ENCODE measurements at regions of chr10 and their contacts with region 1.

Region 1: GRCh38 chr10:110304780-110305421 is at the start of gene SMNDC1:
- DNase-seq: peak; percentile 98
- H3K4me3 Mint-ChIP-seq: peak within 1 kb of the TSS; percentile 94
- H3K27ac Mint-ChIP-seq: peak within 1 kb of the TSS; percentile 95
- H3K4me1 Mint-ChIP-seq: peaks cover 10% of the 10 kb centered on the region
- H3K27me3 Mint-ChIP-seq: no peaks in the 10 kb centered on the region
- CTCF ChIP-seq: no peak
- total RNA-seq, gene SMNDC1: 46.6 and 48.2 TPM in 2 replicates

Region 2: DNA sequence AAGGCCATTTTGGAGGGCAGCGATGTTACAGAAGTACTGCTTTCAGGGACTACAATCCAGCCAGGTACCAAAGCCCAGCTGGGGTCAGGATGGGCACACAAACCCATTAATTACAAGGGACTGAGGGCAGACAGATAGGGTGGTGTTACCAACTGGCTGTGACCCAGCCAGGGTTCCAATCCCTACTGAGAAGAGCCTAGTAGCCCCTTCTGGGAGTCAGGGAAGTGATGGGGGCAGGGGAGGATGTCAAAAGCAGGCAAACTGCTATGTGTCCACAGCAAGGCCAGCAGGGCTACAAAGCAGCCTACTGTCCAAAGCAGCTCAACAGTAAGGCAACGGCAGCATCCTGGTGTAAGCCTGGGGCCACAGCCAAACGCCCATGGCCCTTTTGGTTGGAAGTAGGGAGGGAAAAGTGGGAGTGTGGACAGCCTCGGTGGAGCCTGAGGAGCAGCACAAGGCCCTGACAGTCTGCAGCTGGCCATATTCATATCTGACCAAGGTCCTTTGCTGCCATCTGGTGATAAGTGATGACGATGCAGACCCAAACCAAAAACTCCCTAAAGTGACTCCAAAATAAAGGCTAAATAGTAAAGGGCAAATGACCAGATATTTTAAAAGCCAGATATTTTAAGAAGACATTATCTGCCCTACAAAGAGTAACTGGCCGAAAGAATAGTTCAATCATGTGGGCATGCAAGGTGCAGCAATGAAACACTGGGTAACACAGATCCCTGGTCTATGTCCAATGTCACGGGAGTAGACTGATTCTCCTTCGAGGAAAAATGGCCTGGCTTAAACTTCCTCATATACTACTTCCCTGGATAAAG is 438.5 kb before region 1 on chr10:
- CTCF ChIA-PET with region 1: no interaction called
- POLR2A ChIA-PET with region 1: no interaction called
- intact Hi-C with region 1: no loop called
- DNase-seq: peak; percentile 22
- H3K4me3 Mint-ChIP-seq: no peak overlapping the region
- H3K27ac Mint-ChIP-seq: no peak overlapping the region
- H3K4me1 Mint-ChIP-seq: no peaks in the 10 kb centered on the region
- H3K27me3 Mint-ChIP-seq: no peaks in the 10 kb centered on the region
- CTCF ChIP-seq: peak; percentile 14

Region 3: GRCh38 chr10:110285501-110285900 is 19.4 kb before region 1 on chr10:
- CTCF ChIA-PET with region 1: interaction called, 4 read pairs
- POLR2A ChIA-PET with region 1: interaction called, 12 read pairs
- intact Hi-C with region 1: no loop called
- DNase-seq: no peak
- H3K4me3 Mint-ChIP-seq: no peak overlapping the region
- H3K27ac Mint-ChIP-seq: no peak overlapping the region
- H3K4me1 Mint-ChIP-seq: no peaks in the 10 kb centered on the region
- H3K27me3 Mint-ChIP-seq: no peaks in the 10 kb centered on the region
- CTCF ChIP-seq: no peak

Region 4: DNA sequence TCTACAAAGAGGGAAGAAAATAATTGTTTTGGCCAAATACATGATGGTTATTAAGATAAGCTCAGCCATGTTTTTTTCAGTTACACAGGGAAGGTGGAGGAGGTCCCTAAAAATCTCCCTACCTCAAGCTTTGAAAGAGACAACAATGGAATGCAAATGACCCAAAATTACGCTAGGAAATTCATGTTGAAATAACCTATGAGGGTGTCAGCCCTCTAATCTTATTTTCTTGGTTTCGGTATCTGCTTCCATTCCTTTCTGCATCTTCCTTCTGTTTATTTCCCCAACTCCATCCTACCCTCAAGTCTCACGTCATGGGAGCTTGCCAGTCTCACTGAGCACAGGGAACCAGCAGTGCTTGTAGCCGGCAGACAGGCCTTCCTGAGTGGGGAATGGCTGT is 40.4 kb after region 1 on chr10:
- CTCF ChIA-PET with region 1: no interaction called
- POLR2A ChIA-PET with region 1: no interaction called
- intact Hi-C with region 1: no loop called
- DNase-seq: no peak
- H3K4me3 Mint-ChIP-seq: no peak overlapping the region
- H3K27ac Mint-ChIP-seq: no peak overlapping the region
- H3K4me1 Mint-ChIP-seq: peaks cover 11% of the 10 kb centered on the region
- H3K27me3 Mint-ChIP-seq: no peaks in the 10 kb centered on the region
- CTCF ChIP-seq: no peak

Region 5: DNA sequence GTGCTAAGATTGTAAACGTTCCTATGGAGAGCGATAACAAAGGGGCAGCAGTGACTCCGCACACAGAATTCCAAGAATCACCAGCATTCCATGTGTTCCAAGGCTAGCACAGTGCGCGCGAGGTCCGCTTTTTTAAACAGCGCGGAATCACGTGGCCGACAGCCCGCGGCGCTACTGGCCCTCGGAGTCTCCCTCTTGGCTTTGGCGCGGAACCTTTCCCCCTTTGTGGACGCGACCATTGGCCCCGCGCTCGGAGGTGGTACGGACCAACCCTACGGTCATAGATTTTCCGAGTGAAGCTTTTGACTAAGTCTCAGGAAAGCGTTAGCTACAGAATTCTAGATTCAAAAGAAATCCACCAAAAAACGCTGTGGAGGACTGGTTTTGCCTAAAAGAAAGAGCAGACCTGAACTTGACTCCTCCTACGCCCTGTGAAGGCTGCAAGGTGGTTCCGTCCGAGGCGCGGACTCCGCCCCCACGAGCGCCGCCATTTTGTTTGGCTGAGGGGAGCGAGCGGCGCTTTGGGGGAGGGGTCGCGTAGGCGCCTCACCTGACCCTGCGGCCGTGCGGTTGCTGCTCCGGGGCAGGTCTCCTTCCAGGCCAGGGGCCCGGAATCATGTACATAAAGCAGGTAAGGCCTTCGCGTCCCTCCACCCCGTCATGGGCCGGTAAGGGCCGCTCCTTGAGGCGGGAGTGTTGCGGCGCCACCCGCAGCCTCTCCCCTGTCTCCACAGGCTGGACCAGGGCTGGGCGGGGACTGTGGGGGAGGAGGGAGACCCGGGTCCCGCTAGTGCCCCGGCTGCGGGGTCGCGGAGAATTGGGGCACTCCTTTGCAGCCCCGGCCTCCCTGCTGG is 262.5 kb after region 1 on chr10 and contains the start of gene SMC3:
- CTCF ChIA-PET with region 1: interaction called, 5 read pairs
- POLR2A ChIA-PET with region 1: interaction called, 20 read pairs
- intact Hi-C with region 1: no loop called
- DNase-seq: peak; percentile 94
- H3K4me3 Mint-ChIP-seq: peak within 1 kb of the TSS; percentile 95
- H3K27ac Mint-ChIP-seq: peak within 1 kb of the TSS; percentile 99
- H3K4me1 Mint-ChIP-seq: peaks cover 21% of the 10 kb centered on the region
- H3K27me3 Mint-ChIP-seq: no peaks in the 10 kb centered on the region
- CTCF ChIP-seq: no peak
- total RNA-seq, gene SMC3: 43.0 and 43.2 TPM in 2 replicates

Measured in MCF 10A (cell line).